Heart left ventricle (tissue), 16 donors: ENCODE measurements at regions of chr5 and their contacts with region 1.

Region 1: DNA sequence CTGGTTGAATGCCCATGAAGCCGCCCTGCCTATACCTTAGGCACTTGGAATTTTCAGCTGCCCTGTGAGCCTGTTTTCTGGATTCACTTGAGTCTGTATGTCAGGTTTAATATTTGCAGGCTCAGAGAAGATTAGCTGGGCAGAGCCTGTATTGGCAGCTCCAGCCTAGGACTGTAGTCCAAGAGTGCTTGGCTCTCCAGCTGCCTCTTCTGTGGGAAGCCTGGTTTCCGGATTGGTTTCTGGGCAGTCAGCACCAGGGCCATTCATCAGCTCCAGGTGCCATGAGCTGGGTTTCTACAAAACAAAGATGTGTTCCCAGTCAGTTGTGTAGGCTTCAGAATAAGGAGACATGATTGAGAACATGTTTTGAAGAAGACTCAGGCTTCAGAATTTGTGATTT is 90.1 kb downstream of the ARHGAP26 start:
- DNase-seq: peak in 1 of 5 donors; percentile 54
- ATAC-seq: peak; percentile 35 to 80 (median 58)
- H3K4me3 ChIP-seq: no peak overlapping the region
- H3K27ac ChIP-seq: peak overlapping the region in 9 of 12 donors; percentile 6 to 47 (median 26)
- H3K4me1 ChIP-seq: peaks cover 0 to 88% (median 61%) of the 10 kb centered on the region in 12 donors
- H3K27me3 ChIP-seq: no peaks in the 10 kb centered on the region
- CTCF ChIP-seq: no peak
- POLR2A ChIP-seq: no peak

Region 2: GRCh38 chr5:142816531-142817430 is 43.5 kb before region 1 on chr5:
- intact Hi-C with region 1: loop called in 4 of 10 experiments (anchors 5 to 10 kb)
- DNase-seq: peak in 3 of 5 donors; percentile 68 to 75 (median 75)
- ATAC-seq: peak in 3 of 4 donors; percentile 32 to 55 (median 36)
- H3K4me3 ChIP-seq: no peak overlapping the region
- H3K27ac ChIP-seq: peak overlapping the region in 11 of 12 donors; percentile 7 to 91 (median 50)
- H3K4me1 ChIP-seq: peaks cover 12 to 90% (median 68%) of the 10 kb centered on the region in 12 donors
- H3K27me3 ChIP-seq: no peaks in the 10 kb centered on the region
- CTCF ChIP-seq: no peak
- POLR2A ChIP-seq: no peak

Region 3: GRCh38 chr5:142821733-142822487 is 38.4 kb before region 1 on chr5:
- intact Hi-C with region 1: loop called in 5 of 10 experiments (anchors 5 to 10 kb)
- DNase-seq: no peak
- ATAC-seq: peak in 2 of 4 donors; percentile 24 to 25
- H3K4me3 ChIP-seq: no peak overlapping the region
- H3K27ac ChIP-seq: peak overlapping the region in 1 of 12 donors; percentile 65
- H3K4me1 ChIP-seq: peaks cover 3 to 89% (median 66%) of the 10 kb centered on the region in 12 donors
- H3K27me3 ChIP-seq: no peaks in the 10 kb centered on the region
- CTCF ChIP-seq: no peak
- POLR2A ChIP-seq: no peak

Region 4: DNA sequence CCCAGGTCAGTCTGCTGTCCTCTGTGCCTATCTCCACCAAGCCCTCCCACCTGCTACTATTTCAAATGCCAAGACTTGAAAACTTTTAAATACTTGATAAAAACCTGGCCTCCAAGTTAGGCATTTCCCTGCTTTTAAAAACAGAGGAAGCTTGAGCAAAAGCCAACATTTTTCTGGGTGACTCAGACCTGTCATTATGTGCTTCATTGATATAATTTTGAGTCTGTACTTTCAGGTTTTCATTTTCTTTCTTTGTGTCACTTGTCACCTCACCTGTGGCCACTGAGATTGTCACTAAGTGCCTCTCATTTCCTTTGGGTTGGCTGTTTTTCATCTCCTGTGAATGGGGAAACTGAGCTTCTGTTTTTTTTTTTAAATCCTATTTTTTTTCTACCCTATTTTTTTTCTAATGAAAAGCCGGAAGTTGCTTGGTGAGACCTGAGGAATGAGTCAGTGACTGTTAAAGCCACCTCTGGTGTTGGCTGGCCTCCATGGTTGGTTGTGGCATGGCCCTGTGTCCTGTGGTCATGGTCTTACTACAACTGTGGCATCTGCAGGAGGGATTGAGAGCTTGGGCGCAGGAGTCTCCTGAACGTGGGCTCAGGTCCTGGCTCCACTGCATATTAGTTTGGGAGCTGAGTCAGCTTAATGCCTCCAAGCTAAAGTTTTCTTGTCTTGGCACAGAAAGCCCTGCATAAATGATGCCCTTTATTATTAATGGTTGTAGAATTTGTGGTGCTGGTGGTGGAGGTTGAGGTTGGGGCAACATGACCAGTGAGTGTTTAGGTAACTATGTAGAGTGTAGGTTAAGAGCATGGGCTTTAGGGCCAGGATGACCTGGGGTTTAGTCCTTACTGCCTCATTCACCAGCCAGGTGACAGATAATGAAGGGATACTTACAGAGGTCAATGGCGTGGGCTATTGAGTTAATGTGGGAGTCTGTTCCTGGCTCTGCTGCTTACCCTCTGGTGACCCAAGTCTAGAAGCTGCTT is 33.2 kb before region 1 on chr5:
- intact Hi-C with region 1: loop called in 3 of 10 experiments (anchors 5 kb)
- DNase-seq: no peak
- ATAC-seq: peak in 1 of 4 donors; percentile 26
- H3K4me3 ChIP-seq: no peak overlapping the region
- H3K27ac ChIP-seq: peak overlapping the region in 11 of 12 donors; percentile 22 to 75 (median 55)
- H3K4me1 ChIP-seq: peaks cover 0 to 96% (median 76%) of the 10 kb centered on the region in 12 donors
- H3K27me3 ChIP-seq: no peaks in the 10 kb centered on the region
- CTCF ChIP-seq: no peak
- POLR2A ChIP-seq: no peak